PC-9 (cell line): ENCODE measurements at regions of chr2 and their contacts with region 1.

Region 1: GRCh38 chr2:36912695-36913094 is 53.6 kb downstream of the STRN start:
- DNase-seq: no peak
- H3K4me3 ChIP-seq: no peak overlapping the region
- H3K27ac ChIP-seq: no peak overlapping the region
- H3K4me1 ChIP-seq: no peaks in the 10 kb centered on the region
- H3K27me3 ChIP-seq: no peaks in the 10 kb centered on the region
- CTCF ChIP-seq: no peak

Region 2: GRCh38 chr2:36123995-36124394 is 788.7 kb before region 1 on chr2:
- CTCF ChIA-PET with region 1: no interaction called
- POLR2A ChIA-PET with region 1: no interaction called
- intact Hi-C with region 1: no loop called
- DNase-seq: no peak
- H3K4me3 ChIP-seq: no peak overlapping the region
- H3K27ac ChIP-seq: no peak overlapping the region
- H3K4me1 ChIP-seq: no peaks in the 10 kb centered on the region
- H3K27me3 ChIP-seq: no peaks in the 10 kb centered on the region; the same call in 1 of the 2 replicates
- CTCF ChIP-seq: no peak

Region 3: DNA sequence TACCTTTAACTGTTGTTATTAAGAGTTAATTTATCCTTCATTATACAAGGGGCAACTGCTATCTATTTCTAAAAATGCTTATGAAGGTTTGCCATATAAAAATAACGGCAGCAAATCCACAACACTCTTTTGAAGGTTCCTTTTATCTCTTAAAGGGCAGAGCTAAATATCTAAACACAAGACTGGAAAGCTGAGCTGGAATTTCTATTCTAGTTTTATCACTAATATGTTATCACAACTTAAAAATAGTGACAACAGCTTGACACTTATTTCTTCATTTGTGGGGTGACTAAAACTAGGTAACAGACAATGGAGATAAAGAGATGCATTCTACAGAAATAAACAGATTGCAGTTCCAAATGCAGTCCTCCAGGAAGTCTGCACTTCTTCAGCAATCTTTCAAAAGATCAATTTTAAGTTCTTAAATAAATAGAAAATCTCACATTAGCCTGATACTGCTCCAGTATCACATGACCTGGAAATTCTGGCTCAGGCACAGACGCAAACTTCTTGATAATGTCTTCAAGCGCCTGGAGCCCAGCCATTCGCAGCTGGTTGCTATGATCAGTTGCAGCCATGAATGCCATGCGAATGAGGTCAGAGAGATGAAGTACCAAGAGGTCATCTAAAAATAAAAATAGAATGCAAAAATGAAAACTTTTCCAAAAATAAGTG is 107.7 kb after region 1 on chr2:
- CTCF ChIA-PET with region 1: no interaction called
- POLR2A ChIA-PET with region 1: interaction called, 18 read pairs
- intact Hi-C with region 1: no loop called
- DNase-seq: no peak
- H3K4me3 ChIP-seq: no peak overlapping the region
- H3K27ac ChIP-seq: no peak overlapping the region
- H3K4me1 ChIP-seq: no peaks in the 10 kb centered on the region
- H3K27me3 ChIP-seq: no peaks in the 10 kb centered on the region
- CTCF ChIP-seq: no peak